ENCODE measurements at regions of chr16 and their contacts with region 1.

Region 1: GRCh38 chr16:28491970-28492474 is at the start of gene CLN3:
- H3K4me3 Mint-ChIP-seq: peak within 1 kb of the TSS; percentile 88
- H3K27ac Mint-ChIP-seq: peak within 1 kb of the TSS; percentile 96
- H3K4me1 Mint-ChIP-seq: peaks cover 65% of the 10 kb centered on the region
- H3K27me3 Mint-ChIP-seq: no peaks in the 10 kb centered on the region

Region 2: DNA sequence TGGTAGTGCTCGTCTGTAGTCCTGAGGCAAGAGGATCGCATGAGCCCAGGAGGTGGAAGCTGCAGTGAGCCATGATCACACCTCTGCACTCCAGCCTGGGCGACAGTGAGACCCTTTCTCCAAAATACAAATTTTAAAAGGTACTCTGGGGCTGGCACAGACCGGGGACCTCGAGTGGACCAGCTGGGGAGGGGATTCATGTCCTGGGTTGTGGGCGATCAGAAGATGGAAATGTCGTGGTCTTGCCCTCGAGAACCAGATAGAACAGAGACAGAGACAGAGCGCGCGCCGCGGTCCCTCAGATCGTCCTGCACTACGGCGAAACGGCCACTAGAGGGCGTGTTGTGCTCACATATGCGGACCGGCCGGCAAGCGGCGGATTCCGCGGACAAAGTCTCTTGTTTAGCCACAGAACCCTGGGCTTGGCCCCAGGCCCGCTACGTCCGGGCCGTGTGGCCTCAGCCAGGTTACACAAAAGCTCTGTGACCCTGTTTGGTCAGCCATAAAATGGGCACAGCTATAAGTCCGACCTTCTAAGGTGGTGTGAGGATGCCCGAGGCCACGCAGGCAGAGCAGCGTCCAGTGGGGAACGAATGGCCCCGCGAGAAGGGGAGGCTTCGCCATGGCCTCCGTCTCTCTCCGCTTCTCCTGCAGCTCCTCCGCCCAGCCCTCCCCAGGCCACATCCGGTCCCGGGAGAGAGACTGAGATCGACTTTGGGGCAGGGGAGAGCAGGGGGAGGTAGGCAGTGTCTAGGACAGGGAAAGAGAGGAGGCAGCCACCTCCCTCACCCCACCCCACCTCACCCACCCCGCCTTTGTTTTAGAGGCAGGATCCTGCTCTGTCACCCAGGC is 214.3 kb before region 1 on chr16:
- intact Hi-C with region 1: loop called (anchors 5 kb)
- H3K4me3 Mint-ChIP-seq: peak overlapping the region; percentile 55
- H3K27ac Mint-ChIP-seq: no peak overlapping the region
- H3K4me1 Mint-ChIP-seq: peaks cover 13% of the 10 kb centered on the region
- H3K27me3 Mint-ChIP-seq: peaks cover 42% of the 10 kb centered on the region

Region 3: GRCh38 chr16:28505489-28506137 is 13.6 kb after region 1 on chr16:
- intact Hi-C with region 1: loop called (anchors 1 kb)
- H3K4me3 Mint-ChIP-seq: no peak overlapping the region
- H3K27ac Mint-ChIP-seq: no peak overlapping the region
- H3K4me1 Mint-ChIP-seq: peaks cover 43% of the 10 kb centered on the region
- H3K27me3 Mint-ChIP-seq: no peaks in the 10 kb centered on the region

Region 4: DNA sequence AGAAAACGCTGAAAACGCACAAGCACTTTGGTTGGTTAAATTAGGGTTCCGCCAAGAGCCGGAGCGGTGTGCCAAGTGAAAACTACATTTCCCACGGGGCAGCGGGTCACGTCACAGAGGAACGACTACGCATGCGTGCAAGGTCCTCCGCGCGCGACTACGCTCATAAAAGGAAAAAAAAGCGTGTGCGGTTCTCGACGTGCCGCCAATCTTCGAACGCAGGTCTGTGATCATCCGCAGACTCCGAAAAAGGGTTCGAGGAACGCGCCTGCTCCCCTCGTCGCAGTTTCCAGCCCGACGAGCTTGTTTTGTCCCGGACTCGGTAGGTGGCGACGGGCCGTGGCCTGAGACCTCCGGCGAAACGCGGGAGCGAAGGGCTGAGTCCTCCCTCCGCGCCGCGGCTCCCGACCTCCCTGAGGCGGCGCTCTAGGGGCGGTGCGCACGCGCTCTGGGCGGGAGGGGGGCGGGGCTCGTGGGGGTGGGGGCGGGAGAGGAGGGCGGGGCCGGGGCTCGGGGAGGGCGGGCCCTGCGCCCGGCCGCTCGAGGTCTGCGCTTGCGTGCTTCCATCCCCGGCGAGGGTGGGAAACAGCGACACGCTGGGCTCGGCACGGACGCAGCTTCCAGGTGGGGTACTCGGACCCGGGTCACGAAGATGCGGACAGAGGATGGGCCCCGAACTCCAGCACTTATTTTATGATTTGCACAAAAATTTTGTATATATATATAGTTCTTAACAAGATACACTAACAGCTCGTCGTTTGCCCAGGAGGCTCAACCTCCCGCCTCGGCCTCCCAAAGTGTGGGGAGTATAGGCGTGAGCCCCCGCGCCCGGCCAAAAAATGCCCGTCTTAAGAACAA is 62.0 kb after region 1 on chr16 and contains the start of gene SGF29:
- intact Hi-C with region 1: loop called (anchors 5 kb)
- H3K4me3 Mint-ChIP-seq: peak within 1 kb of the TSS; percentile 88
- H3K27ac Mint-ChIP-seq: peak within 1 kb of the TSS; percentile 95
- H3K4me1 Mint-ChIP-seq: peaks cover 37% of the 10 kb centered on the region
- H3K27me3 Mint-ChIP-seq: no peaks in the 10 kb centered on the region